ENCODE measurements at regions of chr10 and their contacts with region 1.

Region 1: GRCh38 chr10:69383558-69383957 is 33.2 kb downstream of the TACR2 start:
- DNase-seq: peak in 1 of 2 experiments; percentile 59
- H3K4me3 ChIP-seq: no peak overlapping the region
- H3K4me3 Mint-ChIP-seq: no peak overlapping the region
- H3K27ac Mint-ChIP-seq: peak overlapping the region; percentile 29
- H3K4me1 ChIP-seq: peaks cover 19% of the 10 kb centered on the region
- H3K4me1 Mint-ChIP-seq: peaks cover 34% of the 10 kb centered on the region
- H3K27me3 ChIP-seq: no peaks in the 10 kb centered on the region
- H3K27me3 Mint-ChIP-seq: no peaks in the 10 kb centered on the region
- CTCF ChIP-seq: peak; percentile 16 to 50

Region 2: DNA sequence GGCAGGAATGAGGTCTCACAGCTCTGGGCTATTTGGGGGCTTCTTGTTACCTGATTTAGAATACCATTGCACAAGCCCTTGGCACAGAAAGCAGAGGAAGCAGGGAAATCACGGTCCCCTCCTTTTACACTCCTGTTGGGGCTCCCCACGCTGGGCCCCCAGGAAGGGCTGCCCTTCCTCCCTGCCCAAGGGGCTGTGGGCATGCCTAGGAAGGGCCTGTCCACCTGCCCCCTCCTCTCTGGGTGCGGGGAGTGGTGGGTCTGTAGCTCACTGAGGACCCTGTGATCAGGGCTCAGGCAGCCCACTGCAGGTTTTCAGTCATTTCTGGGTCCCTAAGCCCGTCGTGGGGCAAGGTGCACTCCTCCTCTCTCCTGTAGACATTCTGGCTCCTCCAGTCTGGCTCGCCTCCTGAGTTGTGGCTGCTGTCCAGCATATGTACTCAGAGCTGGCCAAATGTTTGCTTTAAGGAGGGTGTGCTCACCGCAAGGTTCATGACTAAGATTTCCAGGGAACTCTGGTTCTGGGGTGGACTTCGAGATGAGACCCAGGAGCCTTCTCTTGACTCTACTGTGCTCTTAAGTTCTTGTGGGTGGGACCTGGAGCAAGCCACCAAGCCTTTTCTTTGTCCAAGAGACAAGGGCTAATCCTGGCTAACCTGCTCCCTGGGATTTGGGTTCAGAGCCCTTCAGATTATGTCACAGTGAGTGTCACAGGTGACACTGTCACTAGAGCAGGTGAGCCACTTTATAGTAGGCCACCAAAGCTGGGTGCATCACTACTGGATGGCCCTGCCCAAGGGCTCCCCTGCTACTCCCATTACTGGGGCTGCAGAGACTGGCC is 22.9 kb before region 1 on chr10:
- CTCF ChIA-PET with region 1: interaction called, 5 read pairs
- POLR2A ChIA-PET with region 1: interaction called, 3 read pairs
- intact Hi-C with region 1: loop called (anchors 2 kb)
- DNase-seq: peak; percentile 75
- H3K4me3 ChIP-seq: no peak overlapping the region
- H3K4me3 Mint-ChIP-seq: no peak overlapping the region
- H3K27ac Mint-ChIP-seq: peak overlapping the region; percentile 37
- H3K4me1 ChIP-seq: peaks cover 13% of the 10 kb centered on the region
- H3K4me1 Mint-ChIP-seq: peaks cover 24% of the 10 kb centered on the region
- H3K27me3 ChIP-seq: no peaks in the 10 kb centered on the region
- H3K27me3 Mint-ChIP-seq: no peaks in the 10 kb centered on the region
- CTCF ChIP-seq: no peak

Measured in Caco-2 (cell line).